Aorta (tissue), 5 donors: ENCODE measurements at regions of chr7 and their contacts with region 1.

Region 1: DNA sequence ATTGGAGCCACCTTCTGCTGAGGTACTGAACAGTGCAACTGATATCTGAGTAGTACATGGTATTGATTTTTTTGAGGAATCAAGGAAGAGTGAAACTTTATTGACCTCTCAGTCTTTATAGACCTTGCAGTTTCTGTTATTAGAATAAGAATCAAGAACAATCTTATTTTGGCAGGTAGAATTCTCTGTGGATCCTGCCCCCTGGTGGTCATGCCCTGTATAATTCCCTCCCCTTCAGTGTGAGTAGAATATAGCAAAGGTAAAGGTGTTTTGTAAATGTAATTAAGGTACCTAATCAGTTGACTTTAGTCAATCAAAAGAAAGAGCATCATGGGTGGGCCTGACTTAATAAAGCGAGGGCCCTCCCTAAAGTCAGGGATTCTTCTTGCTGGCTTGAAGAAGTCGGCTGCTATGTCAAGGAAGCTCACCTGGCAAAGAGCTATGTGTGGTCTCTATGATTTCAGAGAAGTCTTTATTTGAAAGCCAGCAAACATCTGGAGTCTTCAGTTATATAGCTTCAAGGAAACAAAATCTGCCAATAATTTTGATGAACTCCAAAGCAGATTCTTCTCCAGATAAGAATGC is 142.8 kb downstream of the LSM5 start:
- DNase-seq: no peak
- ATAC-seq: no peak
- H3K4me3 ChIP-seq: no peak overlapping the region
- H3K27ac ChIP-seq: no peak overlapping the region
- H3K4me1 ChIP-seq: no peaks in the 10 kb centered on the region
- H3K27me3 ChIP-seq: no peaks in the 10 kb centered on the region

Region 2: DNA sequence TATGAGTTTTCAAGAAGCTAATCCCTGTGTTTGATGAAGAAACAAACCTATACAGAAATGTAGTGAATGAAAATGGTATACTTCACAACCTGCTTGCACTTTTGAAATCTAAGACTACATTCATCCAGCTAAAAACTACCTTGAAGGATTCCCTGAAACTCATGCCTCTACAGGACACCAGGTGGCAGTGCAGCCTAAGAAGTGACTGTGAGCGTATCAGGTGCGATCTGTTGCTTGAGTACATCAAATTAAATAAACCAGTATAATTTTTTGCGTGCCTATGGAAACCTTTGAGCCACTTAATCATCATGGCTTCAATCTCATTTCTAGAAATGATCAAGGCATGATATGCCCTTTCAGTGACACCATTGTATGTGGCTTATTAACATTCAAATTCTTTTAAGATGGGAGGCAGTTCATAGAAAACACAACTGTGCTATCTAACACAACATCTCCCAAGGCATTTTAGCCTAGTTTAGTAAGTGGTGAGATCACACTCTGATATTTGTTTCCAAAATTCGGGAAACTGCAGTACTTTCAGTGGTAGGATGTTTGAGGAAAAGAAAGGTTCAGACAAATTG is 603.0 kb before region 1 on chr7:
- intact Hi-C with region 1: loop called (anchors 5 to 10 kb)
- DNase-seq: peak; percentile 61 to 84
- ATAC-seq: no peak
- H3K4me3 ChIP-seq: no peak overlapping the region
- H3K27ac ChIP-seq: no peak overlapping the region
- H3K4me1 ChIP-seq: no peaks in the 10 kb centered on the region
- H3K27me3 ChIP-seq: peaks cover 0 to under 1% of the 10 kb centered on the region in 2 donors

Region 3: DNA sequence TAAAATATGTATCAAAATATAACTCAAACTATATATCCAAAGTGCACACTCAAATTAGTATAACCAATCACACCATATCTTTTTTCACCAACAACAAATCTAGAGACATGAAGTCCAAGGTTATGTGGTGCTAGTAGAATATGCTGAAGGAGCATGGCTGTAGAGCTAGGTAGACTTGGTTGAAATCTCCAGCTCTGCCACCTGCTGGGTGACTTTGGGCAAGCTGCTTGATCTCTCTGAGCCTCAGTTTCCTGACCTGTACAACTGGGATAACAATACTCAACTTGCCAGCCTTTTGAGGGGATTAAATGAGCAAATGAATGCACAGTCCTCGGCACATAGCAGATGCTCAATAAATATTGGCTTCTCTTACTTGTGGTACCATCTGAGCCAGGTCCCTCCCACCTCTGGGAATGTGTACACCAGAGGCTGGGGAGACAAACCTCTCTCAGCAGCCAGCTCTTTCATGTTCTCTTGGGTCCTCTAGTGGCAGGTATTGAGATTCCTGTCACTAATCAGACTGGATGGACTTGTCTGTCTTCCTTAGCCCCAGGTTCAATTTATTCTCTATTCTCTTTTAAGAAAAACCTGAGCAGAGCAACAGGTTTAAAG is 182.9 kb before region 1 on chr7:
- intact Hi-C with region 1: no loop called
- DNase-seq: no peak
- ATAC-seq: no peak
- H3K4me3 ChIP-seq: no peak overlapping the region
- H3K27ac ChIP-seq: no peak overlapping the region
- H3K4me1 ChIP-seq: peaks cover 6 to 11% of the 10 kb centered on the region in 2 donors
- H3K27me3 ChIP-seq: no peaks in the 10 kb centered on the region

Region 4: GRCh38 chr7:32204361-32205018 is 142.8 kb before region 1 on chr7:
- intact Hi-C with region 1: loop called in 1 of 2 experiments (anchors 10 kb)
- DNase-seq: peak; percentile 71 to 81
- ATAC-seq: peak; percentile 85
- H3K4me3 ChIP-seq: peak overlapping the region in 1 of 2 donors; percentile 57
- H3K27ac ChIP-seq: no peak overlapping the region
- H3K4me1 ChIP-seq: no peaks in the 10 kb centered on the region
- H3K27me3 ChIP-seq: no peaks in the 10 kb centered on the region

Region 5: DNA sequence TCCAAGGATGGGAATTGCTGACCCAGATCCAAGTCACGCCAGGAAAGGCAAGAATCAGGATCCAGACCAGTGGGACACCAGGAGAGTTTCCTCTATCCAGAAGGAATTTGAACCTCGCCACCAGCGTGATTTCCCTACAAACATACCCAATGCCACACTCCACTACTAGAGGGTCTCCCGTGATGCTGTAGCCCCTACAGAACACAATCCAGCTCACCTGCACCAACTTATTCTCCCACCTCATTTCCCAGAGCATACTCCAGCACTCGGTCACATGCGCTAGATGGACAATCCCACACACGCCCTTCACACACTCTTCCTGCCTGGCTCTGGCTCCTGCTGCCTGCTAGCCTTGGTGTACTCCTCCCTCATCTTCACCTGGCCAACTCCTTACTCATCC is 135.0 kb before region 1 on chr7:
- intact Hi-C with region 1: loop called (anchors 5 to 10 kb)
- DNase-seq: no peak
- ATAC-seq: no peak
- H3K4me3 ChIP-seq: no peak overlapping the region
- H3K27ac ChIP-seq: no peak overlapping the region
- H3K4me1 ChIP-seq: no peaks in the 10 kb centered on the region
- H3K27me3 ChIP-seq: no peaks in the 10 kb centered on the region

Region 6: DNA sequence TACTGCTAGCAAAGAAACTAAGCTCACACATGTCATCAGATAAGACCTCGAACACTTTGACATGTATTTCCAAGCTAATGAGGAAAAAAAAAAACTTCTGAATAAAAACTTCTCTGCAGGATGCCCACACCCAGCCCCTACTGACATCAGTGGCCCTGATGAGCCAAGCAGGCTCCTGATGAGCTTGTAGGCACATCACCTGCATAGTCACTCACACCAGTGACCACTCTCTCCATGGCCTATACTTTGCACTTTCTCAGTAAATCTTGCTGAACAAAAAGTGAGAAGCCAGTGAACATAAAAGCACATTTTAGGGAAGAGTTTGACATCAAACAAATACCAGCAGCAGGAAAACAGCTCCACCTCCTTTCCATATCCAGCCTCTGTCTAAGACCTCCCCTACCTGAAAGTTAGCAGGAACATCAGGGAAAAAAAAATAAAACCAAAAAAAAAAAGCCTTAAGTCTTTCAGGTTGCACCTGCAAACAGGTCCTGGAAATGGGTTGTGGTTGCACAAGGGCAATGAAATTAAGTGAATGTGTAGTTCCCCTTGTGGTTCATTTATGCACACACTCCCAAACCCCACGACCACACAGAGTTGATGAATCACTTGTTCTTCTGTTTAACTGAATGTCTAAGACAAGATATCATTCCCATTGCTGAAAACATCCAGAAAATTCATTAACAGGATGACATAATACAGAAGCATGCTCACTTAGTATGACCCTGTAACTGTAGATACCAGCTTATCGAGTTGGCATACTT is 71.9 kb before region 1 on chr7:
- intact Hi-C with region 1: no loop called
- DNase-seq: no peak
- ATAC-seq: no peak
- H3K4me3 ChIP-seq: no peak overlapping the region
- H3K27ac ChIP-seq: no peak overlapping the region
- H3K4me1 ChIP-seq: no peaks in the 10 kb centered on the region
- H3K27me3 ChIP-seq: no peaks in the 10 kb centered on the region

Region 7: GRCh38 chr7:32335107-32335506 is 12.2 kb before region 1 on chr7:
- intact Hi-C with region 1: no loop called
- DNase-seq: no peak
- ATAC-seq: no peak
- H3K4me3 ChIP-seq: no peak overlapping the region
- H3K27ac ChIP-seq: no peak overlapping the region
- H3K4me1 ChIP-seq: no peaks in the 10 kb centered on the region
- H3K27me3 ChIP-seq: no peaks in the 10 kb centered on the region

Region 8: GRCh38 chr7:32616625-32617024 is 269.3 kb after region 1 on chr7:
- intact Hi-C with region 1: no loop called
- DNase-seq: peak; percentile 76 to 79
- ATAC-seq: peak; percentile 72
- H3K4me3 ChIP-seq: no peak overlapping the region
- H3K27ac ChIP-seq: no peak overlapping the region
- H3K4me1 ChIP-seq: peaks cover 0 to 1% of the 10 kb centered on the region in 2 donors
- H3K27me3 ChIP-seq: no peaks in the 10 kb centered on the region